ENCODE measurements at regions of chr5 and their contacts with region 1.

Region 1: GRCh38 chr5:179516221-179516620 is 34.1 kb upstream of the RUFY1 start:
- DNase-seq: no peak
- ATAC-seq: no peak
- H3K4me3 ChIP-seq: no peak overlapping the region
- H3K27ac ChIP-seq: no peak overlapping the region
- H3K4me1 ChIP-seq: no peaks in the 10 kb centered on the region
- H3K27me3 ChIP-seq: peaks cover 0 to 6% (median 2%) of the 10 kb centered on the region in 3 donors
- CTCF ChIP-seq: no peak

Region 2: DNA sequence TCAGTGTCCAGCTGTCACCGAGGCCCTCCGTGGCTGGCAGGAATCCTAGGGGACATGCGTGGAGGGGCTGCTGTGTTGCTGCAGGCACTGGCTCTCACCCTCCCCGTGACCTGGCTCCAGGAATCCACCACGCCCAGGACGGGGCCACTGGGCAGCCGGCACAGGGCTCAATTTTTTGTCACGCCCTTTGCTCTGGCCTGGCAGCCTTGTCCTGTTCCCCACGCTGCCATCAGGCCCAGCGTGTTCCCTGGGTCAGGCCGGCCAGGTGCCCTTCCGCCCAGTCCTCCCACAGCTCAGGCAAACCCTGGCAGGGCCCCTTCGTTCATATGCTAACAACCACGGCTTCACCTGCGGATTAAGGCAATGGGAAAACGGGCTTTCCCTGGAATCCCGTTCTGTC is 1557.5 kb before region 1 on chr5:
- intact Hi-C with region 1: loop called in 1 of 2 experiments (anchors 10 kb)
- DNase-seq: no peak
- ATAC-seq: no peak
- H3K4me3 ChIP-seq: no peak overlapping the region
- H3K27ac ChIP-seq: no peak overlapping the region
- H3K4me1 ChIP-seq: no peaks in the 10 kb centered on the region
- H3K27me3 ChIP-seq: no peaks in the 10 kb centered on the region
- CTCF ChIP-seq: no peak

Region 3: DNA sequence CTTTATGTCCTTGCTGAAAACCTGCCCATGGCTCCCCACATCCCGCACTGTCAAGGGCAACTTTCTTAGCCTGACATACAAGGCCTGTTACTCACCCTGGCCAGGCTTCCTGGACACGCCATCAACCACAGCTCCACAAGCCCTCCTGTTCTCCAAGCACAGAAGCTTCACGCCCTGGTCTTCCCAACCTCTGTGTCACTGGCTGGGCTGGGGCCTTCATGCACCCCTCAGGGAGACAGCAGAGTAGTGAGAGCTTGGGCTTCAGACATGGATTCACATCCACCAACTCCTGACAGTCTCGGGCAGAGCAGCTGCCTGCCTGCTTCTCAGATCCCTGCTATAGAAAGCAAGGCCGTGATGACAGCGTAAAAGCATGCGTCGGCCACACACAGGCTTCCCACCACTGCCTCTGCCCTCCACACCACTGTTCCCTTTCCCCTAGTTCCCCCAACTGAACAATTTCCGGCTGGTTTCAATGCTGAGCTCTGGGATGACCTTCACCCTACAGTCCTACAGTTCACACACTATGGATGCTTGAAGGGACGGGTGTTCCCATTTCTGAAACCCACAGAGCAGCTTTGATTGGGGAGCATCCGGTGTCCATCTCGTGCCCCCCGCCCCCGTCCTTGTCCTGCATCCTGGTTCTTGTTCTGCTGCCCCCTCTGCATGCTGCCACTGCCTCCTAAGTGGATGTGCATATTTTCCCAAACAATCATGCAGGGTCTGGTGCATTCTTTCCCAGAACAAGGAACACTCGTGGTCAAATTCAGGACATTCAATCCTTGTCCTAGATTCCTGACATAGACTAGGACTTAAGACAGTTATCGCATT is 137.6 kb before region 1 on chr5:
- intact Hi-C with region 1: no loop called
- DNase-seq: no peak
- ATAC-seq: no peak
- H3K4me3 ChIP-seq: no peak overlapping the region
- H3K27ac ChIP-seq: no peak overlapping the region
- H3K4me1 ChIP-seq: no peaks in the 10 kb centered on the region
- H3K27me3 ChIP-seq: peaks cover 0 to 3% (median 0%) of the 10 kb centered on the region in 3 donors
- CTCF ChIP-seq: no peak

Region 4: GRCh38 chr5:179486596-179487051 is 29.6 kb before region 1 on chr5:
- intact Hi-C with region 1: no loop called
- DNase-seq: no peak
- ATAC-seq: no peak
- H3K4me3 ChIP-seq: no peak overlapping the region
- H3K27ac ChIP-seq: no peak overlapping the region
- H3K4me1 ChIP-seq: no peaks in the 10 kb centered on the region
- H3K27me3 ChIP-seq: peaks cover 0 to 11% (median 0%) of the 10 kb centered on the region in 3 donors
- CTCF ChIP-seq: no peak